Activated CD8-positive, alpha-beta memory T cell treated with anti-CD3 and anti-CD28 coated beads, Interleukin-2, amount 10 ng/mL, durations not matched to agents 7 days and 5 days (primary cell): ENCODE measurements at regions of chr1 and their contacts with region 1.

Region 1: DNA sequence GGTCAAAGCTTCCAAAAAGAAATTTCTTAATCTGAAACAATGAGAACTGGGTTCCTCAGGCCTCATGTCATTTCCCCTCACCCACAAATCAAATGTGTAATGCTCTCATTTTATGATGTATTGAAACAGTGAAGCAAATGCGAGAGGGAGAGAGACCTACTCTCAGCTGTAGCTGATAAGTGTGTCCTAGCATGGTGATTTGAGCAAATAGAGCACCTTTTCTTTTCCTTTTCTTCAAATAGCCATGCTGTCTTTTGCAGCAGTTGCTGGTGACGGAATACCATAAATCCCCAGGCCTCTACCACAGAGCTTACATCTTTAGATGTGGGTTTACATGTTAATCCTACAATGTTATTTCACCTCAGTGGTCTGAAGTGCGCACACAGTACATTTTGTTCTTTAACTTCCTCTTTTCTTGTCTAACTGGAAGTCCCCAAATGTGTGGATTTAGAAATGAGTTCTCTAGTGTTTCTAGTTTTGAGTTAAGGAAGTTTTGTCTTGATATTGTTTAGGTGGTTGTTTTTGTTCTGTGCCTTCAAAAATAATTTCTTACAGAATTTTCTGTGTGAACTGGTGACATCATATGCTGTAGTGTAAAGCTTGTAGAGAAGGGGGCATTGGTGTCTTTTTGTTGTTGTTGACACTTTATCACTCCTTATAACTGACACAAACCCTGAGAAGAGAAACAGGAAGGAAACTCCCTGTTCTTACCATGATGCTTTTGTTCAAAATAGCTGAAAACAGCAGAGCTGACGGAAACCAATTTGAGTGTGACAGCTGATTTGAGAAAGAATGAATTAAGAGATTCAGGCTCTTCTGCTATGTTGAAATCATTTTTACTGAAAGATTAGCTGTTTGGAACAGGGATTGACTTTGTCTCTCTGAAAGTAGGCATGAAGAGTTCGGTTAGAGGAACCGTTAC is 12.2 kb downstream of the SMAP2 start:
- DNase-seq: peak; percentile 77
- ATAC-seq: peak; percentile 54
- H3K4me3 Mint-ChIP-seq: peak overlapping the region; percentile 72
- H3K27ac Mint-ChIP-seq: peak overlapping the region; percentile 98
- H3K4me1 Mint-ChIP-seq: peaks cover 92% of the 10 kb centered on the region
- H3K27me3 Mint-ChIP-seq: no peaks in the 10 kb centered on the region

Region 2: DNA sequence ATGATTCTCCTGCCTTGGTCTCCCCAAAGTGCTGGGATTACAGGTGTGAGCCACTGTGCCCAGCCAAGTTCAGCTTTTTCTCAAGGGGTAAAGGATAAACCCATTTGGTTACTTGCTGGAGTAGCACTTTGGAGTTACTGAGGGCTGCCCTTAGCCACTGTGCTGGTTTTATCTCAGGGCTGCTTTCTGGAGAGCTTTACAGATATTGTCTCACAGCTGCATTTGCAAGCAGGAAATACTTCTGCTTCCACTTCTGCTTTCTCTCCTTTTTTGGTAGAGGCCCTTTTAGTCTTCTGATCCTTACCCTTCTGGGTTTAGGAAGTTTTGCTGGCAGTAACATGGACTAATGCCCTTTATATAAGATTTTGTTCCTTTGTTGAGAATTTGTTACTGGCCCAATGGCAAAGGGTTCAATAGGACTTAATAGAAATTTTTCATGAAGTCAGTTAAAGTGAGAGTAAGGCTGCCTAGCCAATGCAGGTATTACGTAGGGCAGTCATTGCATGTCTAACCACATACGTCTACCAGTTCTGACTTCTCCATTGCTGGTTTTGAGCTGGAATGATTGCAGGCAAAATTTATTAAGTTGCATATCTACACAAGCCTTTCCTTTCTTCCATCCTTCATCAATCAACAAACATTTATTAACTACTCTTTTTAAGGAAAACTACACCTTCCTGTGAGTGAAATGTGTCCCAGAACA is 320.8 kb before region 1 on chr1:
- CTCF ChIA-PET with region 1: no interaction called
- DNase-seq: no peak
- ATAC-seq: no peak
- H3K4me3 Mint-ChIP-seq: no peak overlapping the region
- H3K27ac Mint-ChIP-seq: peak overlapping the region; percentile 68
- H3K4me1 Mint-ChIP-seq: peaks cover 62% of the 10 kb centered on the region
- H3K27me3 Mint-ChIP-seq: no peaks in the 10 kb centered on the region

Region 3: DNA sequence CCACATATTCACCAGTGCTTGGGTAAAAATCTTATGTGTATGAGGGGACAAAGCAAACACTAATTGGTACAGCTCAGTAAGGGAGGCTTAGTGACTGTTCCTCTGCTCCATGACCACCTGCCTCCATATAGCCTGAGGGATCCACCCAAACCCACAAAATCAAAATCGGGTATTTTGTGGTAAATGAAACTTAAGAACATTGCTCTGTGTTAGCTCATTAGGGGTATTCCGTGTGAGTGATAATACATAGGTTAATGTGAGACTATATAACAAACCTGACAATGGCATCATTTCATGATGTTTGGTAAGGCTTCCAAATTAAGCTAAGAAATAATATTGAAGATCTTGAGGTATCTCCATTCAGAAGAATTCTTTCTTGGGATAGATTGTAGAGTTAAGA is 94.4 kb before region 1 on chr1:
- CTCF ChIA-PET with region 1: no interaction called
- DNase-seq: no peak
- ATAC-seq: no peak
- H3K4me3 Mint-ChIP-seq: no peak overlapping the region
- H3K27ac Mint-ChIP-seq: no peak overlapping the region
- H3K4me1 Mint-ChIP-seq: peaks cover 9% of the 10 kb centered on the region
- H3K27me3 Mint-ChIP-seq: no peaks in the 10 kb centered on the region

Region 4: DNA sequence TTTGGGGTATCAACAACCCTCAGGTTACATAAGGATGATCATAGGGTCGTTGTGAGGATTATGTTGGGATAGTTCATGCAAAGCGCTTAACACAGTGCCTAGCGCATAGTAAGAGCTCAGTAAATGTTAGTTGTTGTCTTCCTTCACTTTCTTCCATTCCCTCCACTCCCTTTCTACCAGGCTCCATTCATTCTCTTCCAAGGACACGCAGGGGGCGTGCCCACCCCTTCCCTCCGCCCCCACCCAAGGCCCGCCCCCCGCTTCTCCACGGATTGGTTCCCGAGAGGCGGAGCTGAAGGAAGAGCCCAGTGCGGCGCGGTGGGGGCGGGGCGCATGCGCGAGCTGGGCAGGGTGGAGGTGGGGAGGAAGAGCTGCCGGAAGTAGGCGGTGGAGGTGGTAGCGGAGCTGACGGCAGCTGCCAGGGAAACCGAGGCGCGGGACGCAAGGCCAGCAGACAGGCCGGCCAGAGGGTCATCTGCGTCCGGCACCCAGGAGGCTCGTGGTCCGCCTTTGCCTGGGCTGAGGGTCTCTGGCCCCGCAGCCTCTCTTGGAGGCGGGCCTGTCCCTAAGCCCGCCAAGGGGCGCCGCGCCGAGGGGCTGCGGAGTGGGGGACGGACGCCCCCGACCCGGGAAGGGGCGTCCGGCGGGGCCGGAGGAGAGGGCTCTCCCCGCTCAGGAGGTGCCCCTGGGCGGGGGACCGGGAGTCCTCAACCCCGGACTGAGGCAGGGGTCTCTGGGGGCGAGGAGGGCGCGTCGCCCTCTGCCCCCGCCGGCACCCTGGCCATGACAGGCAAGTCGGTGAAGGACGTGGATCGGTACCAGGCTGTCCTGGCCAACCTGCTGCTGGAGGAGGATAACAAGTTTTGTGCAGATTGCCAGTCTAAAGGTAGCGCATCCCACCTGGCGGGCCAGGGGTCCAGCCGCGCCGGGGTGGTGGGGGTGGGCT is 12.1 kb before region 1 on chr1 and contains the start of gene SMAP2:
- CTCF ChIA-PET with region 1: interaction called, 40 read pairs
- DNase-seq: peak; percentile 97
- ATAC-seq: peak; percentile 92
- H3K4me3 Mint-ChIP-seq: peak within 1 kb of the TSS; percentile 98
- H3K27ac Mint-ChIP-seq: peak within 1 kb of the TSS; percentile 98
- H3K4me1 Mint-ChIP-seq: peaks cover 42% of the 10 kb centered on the region
- H3K27me3 Mint-ChIP-seq: no peaks in the 10 kb centered on the region
- total RNA-seq, gene SMAP2: 116 to 145 TPM

Region 5: DNA sequence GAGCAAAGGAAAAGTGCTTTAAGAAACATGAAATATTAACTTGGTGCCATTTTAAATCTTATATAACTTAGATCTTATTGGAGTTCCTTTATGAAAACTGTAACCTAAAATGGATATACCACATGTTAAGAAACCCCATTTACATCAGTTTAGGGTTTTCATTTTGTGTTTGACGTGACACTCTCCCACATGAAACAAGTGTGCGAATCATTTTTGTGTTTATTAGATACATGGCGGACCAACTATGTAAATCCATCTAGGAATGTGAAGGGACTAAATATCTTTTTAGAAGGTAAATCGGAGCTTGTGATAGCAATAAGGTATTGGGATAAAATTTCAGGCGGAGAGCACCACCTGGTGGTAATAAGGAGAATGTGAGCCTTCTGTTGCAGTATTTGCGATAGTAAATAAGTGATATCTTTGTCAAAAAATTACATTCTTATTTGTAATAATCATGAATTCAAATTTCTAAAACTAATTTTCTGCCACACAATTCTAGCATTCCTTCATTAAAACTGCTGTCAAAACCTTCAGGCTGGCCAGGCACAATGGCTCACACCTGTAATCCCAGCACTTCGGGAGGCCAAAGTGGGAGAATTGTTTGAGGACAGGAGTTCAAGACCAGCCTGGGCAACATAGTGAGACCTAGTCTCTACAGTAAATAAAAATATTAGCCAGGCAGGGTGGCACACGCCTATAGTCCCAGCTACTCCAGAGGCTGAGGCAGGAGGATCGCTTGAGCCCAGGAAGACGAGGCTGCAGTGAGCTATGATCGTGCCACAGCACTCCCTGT is 19.2 kb after region 1 on chr1:
- CTCF ChIA-PET with region 1: interaction called, 32 read pairs
- DNase-seq: no peak
- ATAC-seq: peak; percentile 50
- H3K4me3 Mint-ChIP-seq: peak overlapping the region; percentile 4
- H3K27ac Mint-ChIP-seq: peak overlapping the region; percentile 82
- H3K4me1 Mint-ChIP-seq: peaks cover 54% of the 10 kb centered on the region
- H3K27me3 Mint-ChIP-seq: no peaks in the 10 kb centered on the region

Region 6: DNA sequence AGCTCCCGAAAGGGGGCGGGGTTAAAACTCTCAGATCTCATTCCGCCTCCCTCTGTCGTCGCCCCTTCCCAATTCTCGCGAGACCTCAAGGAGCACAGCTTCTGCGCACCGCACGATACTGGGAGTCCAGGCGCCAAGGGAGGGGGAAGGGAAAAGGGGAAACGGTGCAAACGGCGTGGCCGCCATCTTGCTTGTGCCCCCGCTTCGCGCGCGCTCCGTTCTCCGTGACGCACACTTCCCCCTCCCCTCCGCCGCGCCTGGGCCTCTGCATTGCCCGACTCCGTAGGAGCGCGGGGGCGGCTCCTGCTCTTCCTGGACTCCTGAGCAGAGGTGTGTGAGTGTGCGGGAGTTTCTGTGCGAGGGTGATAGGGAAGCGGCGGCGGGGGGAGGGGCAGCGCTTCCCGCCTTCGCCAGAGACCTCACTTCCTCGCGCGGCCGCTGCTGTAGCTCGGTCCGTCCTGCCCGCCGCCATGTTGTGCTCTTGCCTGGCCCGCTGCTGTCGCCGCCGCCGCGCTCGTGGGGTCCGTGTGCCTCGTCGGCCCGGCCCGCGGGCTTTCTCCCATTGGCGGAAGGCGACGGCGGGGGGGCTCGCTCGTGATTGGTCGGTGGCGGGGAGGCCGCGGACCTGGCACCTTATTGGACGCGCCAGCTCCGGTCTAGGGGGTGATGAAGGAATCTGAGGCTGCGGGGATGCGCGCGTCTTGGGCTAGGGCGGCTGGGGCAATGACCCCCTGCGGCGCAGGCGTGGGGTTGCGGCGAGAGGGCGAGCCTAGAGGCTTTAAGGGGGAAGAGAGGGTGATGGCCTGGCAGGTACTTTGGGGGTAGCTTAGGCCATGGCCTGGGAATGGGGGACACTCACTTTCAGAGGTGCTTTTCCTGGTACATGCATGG is 306.1 kb after region 1 on chr1 and contains the start of gene NFYC:
- CTCF ChIA-PET with region 1: no interaction called
- DNase-seq: peak; percentile 99
- ATAC-seq: peak; percentile 88
- H3K4me3 Mint-ChIP-seq: peak within 1 kb of the TSS; percentile 90
- H3K27ac Mint-ChIP-seq: peak within 1 kb of the TSS; percentile 90
- H3K4me1 Mint-ChIP-seq: peaks cover 56% of the 10 kb centered on the region
- H3K27me3 Mint-ChIP-seq: no peaks in the 10 kb centered on the region
- total RNA-seq, gene NFYC: 71.1 to 91.2 TPM